ENCODE measurements at regions of chr13 and their contacts with region 1.

Region 1: DNA sequence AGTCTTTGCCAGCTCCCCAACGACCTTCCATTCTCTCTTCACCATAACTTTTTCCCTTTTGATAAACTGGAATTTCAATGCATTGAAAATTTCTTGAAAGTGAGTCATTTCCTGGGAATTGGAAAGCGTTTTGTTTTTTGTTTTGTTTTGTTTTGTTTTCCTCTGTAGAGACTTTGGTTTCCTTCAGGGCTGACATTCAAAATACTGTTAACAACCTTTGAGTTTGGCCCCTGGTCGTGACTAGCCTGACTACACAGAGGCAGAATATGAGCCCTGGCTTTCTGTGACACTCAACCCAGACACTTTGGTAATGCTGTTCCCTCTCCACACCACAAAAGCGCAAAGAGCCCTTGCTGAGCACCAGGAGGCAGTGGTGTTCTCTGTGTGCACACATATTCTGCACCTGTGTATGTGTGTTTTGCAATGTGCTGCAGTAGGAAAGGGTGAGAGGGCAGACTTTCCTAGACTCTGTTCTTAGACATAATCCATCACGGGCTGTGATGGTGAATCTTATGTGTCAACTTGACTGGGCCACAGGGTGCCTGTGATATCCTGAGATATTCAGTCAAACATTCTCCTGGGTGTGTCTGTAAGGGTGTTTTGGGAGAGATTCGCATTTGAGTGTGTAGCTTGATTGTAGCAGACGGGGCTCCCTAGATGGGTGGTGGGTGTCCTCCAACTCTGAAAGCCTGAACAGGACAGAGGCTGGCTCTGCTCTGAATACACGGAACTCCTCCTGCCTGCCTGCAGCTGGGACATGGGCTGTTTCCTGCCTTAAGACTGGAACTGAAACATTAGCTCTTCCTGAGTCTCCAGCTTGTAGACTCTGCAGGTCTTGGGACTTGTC is 29.5 kb upstream of the ANKRD10 start:
- DNase-seq: peak; percentile 53
- H3K4me3 Mint-ChIP-seq: peak overlapping the region; percentile 51
- H3K27ac Mint-ChIP-seq: peak overlapping the region; percentile 87
- H3K4me1 Mint-ChIP-seq: peaks cover 56% of the 10 kb centered on the region
- H3K27me3 Mint-ChIP-seq: no peaks in the 10 kb centered on the region

Region 2: DNA sequence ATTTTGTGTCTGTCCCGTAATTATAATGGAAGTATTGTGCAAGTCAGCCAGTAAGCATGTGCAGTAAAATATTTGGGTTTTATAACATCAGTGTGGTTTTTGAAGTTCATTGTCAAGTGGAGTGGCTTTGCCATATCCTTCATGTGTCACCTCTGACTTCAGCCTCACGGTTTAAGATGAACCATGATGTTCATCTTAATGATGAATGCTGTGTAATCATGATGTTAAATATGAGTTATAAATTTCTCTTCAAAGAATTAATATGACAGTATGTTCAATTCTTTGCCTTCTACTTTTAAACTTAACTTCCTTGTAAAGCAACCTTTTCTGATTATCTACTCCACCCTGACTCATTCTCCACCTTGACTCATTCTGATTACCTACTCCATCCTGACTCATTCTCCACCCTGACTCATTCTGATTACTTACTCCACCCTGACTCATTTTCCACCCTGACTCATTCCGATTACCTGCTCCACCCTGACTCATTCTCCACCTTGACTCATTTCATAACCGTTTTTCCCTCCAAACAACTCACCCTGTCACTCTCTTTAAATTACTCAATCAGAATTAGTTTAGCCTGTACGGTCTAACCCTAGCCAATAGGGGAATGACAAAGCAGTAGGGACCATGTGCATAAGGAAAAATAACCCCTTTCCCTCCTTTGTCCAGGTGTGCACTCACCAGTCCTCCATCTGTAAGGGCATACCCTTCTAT is 20.9 kb after region 1 on chr13:
- intact Hi-C with region 1: loop called (anchors 1 kb)
- DNase-seq: peak; percentile 55
- H3K4me3 Mint-ChIP-seq: peak overlapping the region; percentile 32
- H3K27ac Mint-ChIP-seq: peak overlapping the region; percentile 95
- H3K4me1 Mint-ChIP-seq: peaks cover 54% of the 10 kb centered on the region
- H3K27me3 Mint-ChIP-seq: peaks cover 2% of the 10 kb centered on the region

Region 3: GRCh38 chr13:111046590-111047141 is 102.3 kb after region 1 on chr13:
- intact Hi-C with region 1: loop called (anchors 1 kb)
- DNase-seq: no peak
- H3K4me3 Mint-ChIP-seq: no peak overlapping the region
- H3K27ac Mint-ChIP-seq: peak overlapping the region; percentile 56
- H3K4me1 Mint-ChIP-seq: peaks cover 11% of the 10 kb centered on the region
- H3K27me3 Mint-ChIP-seq: peaks cover 8% of the 10 kb centered on the region

Region 4: DNA sequence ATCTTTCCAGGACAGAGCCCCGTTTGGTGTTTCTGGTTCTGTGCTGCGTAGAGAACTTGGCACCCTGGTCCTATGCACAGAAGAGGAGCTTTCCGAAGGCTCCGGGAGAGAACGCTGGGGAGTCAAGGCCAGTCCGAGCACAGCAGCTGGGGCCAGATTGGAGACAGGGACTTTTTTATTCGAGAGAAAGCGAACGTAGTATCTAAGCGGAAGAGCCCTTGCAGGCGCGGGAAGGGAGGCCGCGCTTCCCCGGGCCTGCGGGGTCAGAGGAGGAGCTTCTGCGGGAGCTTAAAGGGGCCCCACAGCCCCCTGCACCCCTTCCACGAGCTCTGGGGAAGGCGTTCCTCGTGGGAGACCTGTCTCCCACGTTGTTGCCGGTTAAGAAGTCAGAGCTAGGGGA is 122.2 kb after region 1 on chr13:
- intact Hi-C with region 1: loop called (anchors 1 kb)
- DNase-seq: no peak
- H3K4me3 Mint-ChIP-seq: peak overlapping the region; percentile 78
- H3K27ac Mint-ChIP-seq: no peak overlapping the region
- H3K4me1 Mint-ChIP-seq: peaks cover 6% of the 10 kb centered on the region
- H3K27me3 Mint-ChIP-seq: peaks cover 50% of the 10 kb centered on the region

Region 5: DNA sequence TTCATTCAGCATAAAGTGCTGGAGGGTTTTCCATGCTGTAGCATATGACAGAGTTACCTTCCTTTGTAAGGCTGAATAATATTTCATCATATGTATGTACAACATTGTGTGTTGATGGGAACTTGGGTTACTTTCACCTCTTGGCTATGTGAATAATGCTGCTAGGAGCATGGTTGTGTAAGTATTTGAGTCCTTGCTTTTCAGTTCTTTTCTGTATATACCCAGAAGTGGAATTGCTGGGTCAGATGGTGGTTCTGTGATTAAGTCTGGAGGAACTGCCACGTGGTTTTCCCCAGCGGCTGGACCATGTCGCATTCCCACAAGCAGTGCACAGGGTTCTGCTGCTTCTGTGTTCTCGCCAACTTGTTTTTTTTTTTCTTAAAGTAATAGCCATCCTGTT is 274.9 kb after region 1 on chr13:
- intact Hi-C with region 1: loop called (anchors 2 kb)
- DNase-seq: no peak
- H3K4me3 Mint-ChIP-seq: no peak overlapping the region
- H3K27ac Mint-ChIP-seq: no peak overlapping the region
- H3K4me1 Mint-ChIP-seq: peaks cover 36% of the 10 kb centered on the region
- H3K27me3 Mint-ChIP-seq: no peaks in the 10 kb centered on the region